Activated B cell treated with CpG ODN at 0.5 μM for 24 hours (primary cell): ENCODE measurements at regions of chr5 and their contacts with region 1.

Region 1: DNA sequence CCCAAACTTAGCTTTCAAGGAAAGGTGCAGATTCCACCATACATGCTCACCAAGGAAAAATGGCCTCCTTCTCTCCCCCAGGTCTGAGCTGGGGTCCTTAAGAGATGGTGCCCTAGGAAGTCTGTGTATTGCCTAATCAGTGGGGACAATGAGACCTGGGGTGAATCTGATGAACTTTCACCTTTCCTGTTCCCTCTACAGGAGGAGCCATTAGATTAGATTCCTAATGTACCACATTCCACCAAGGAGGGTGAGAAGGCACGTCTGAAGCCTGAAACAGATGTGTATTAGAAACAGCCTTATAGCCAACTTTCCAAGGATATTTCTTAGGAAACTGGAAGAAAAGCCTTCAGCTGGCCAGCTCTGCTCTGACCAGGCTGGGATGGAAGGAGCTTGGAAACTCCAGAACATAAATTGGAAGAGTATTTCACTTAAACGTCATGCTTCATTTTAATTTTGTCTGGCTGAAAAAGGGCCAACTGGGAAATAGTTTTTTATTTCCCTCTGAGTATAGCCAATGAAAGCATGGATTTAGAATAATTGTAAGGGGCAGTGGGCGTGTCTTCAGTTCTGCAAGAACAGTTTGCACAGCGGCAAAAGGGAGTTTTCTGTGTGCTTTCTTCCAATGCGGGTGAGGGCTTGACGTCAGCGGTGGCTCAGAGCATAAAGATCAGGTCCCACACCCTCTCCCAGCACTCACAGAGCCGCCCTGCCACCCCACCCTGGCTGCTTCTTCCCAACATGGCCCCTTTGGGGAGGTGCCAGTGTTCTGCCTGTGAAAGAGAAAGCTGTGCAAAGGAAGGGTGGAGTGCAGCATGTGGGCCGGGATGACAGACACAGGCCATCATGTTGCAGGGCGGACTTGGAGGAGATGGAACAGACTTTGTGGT is 210.9 kb downstream of the ESM1 start:
- DNase-seq: no peak
- ATAC-seq: peak; percentile 16
- H3K4me3 Mint-ChIP-seq: no peak overlapping the region
- H3K27ac Mint-ChIP-seq: no peak overlapping the region
- H3K4me1 Mint-ChIP-seq: peaks cover 62% of the 10 kb centered on the region
- H3K27me3 Mint-ChIP-seq: no peaks in the 10 kb centered on the region
- CTCF ChIP-seq: no peak

Region 2: DNA sequence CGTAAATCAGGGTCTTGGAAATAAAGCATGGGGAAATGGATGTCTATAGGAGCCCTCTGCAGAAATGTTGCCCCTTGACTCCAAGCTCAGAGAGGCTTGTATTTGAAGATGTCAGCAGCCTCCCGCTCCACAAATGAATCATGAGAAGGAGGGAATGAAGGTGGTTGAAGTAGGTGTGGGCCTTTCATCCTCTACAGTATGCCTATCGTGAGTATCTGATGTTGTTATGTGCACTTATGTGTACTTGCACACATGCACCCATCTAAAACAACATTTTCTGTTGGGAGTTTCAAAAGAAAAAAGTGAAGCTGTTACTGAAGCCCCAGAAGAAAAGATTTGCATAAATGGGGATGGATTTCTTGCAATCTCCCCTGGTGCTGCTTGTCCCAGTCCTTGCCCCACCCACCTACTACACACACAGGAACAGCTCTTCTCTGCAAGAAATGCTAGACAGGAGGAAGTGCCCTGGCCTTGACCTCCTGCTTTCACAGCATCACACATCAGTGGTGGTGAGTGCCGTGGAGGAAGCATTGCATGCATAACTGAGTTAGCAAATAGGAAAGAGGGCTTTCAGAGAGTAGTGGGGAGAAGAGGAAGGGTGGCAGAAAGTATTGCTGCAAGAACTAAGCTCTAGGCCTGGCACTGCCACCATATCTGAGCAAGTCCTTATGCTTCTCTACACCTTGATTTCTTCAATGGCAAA is 100.9 kb before region 1 on chr5:
- CTCF ChIA-PET with region 1: no interaction called
- POLR2A ChIA-PET with region 1: no interaction called
- intact Hi-C with region 1: loop called (anchors 5 kb)
- DNase-seq: peak; percentile 29
- ATAC-seq: peak; percentile 90
- H3K4me3 Mint-ChIP-seq: no peak overlapping the region
- H3K27ac Mint-ChIP-seq: peak overlapping the region; percentile 16
- H3K4me1 Mint-ChIP-seq: peaks cover 80% of the 10 kb centered on the region
- H3K27me3 Mint-ChIP-seq: no peaks in the 10 kb centered on the region
- CTCF ChIP-seq: no peak

Region 3: GRCh38 chr5:54761213-54761701 is 13.3 kb before region 1 on chr5:
- CTCF ChIA-PET with region 1: interaction called, 6 read pairs
- POLR2A ChIA-PET with region 1: interaction called, 7 read pairs
- intact Hi-C with region 1: loop called (anchors 1 kb)
- DNase-seq: no peak
- ATAC-seq: no peak
- H3K4me3 Mint-ChIP-seq: no peak overlapping the region
- H3K27ac Mint-ChIP-seq: no peak overlapping the region
- H3K4me1 Mint-ChIP-seq: peaks cover 69% of the 10 kb centered on the region
- H3K27me3 Mint-ChIP-seq: no peaks in the 10 kb centered on the region
- CTCF ChIP-seq: no peak

Region 4: DNA sequence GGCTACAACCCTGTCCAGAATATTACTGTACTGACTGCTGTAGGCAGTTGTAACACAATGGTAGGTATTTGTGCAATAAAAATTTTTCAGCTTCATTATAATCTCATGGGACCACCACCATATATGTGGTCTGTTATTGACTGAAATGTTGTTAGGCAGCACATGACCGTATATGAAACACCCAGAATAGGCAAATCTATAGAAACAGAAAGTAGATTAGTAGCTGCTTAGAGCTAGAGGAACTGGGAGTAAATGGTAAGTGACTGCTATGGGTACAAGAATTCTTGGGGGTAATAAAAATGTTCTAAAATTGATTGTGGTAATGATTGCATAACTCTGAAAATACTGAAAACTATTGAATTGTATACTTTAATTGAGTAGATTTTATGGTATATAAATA is 25.1 kb after region 1 on chr5:
- CTCF ChIA-PET with region 1: no interaction called
- POLR2A ChIA-PET with region 1: no interaction called
- intact Hi-C with region 1: loop called (anchors 2 kb)
- DNase-seq: no peak
- ATAC-seq: peak; percentile 94
- H3K4me3 Mint-ChIP-seq: peak overlapping the region; percentile 11
- H3K27ac Mint-ChIP-seq: peak overlapping the region; percentile 7
- H3K4me1 Mint-ChIP-seq: peaks cover 30% of the 10 kb centered on the region
- H3K27me3 Mint-ChIP-seq: no peaks in the 10 kb centered on the region
- CTCF ChIP-seq: no peak